CD4-positive, alpha-beta memory T cell (primary cell): ENCODE measurements at regions of chr6 and their contacts with region 1.

Region 1: GRCh38 chr6:16206595-16207037 is 31.8 kb upstream of the GMPR start:
- DNase-seq: peak; percentile 49 to 58 (median 55)
- H3K4me3 ChIP-seq: no peak overlapping the region
- H3K4me3 Mint-ChIP-seq: no peak overlapping the region
- H3K27ac ChIP-seq: no peak overlapping the region
- H3K27ac Mint-ChIP-seq: no peak overlapping the region
- H3K4me1 ChIP-seq: no peaks in the 10 kb centered on the region
- H3K4me1 Mint-ChIP-seq: peaks cover 0 to 4% (median 2%) of the 10 kb centered on the region in 4 donors
- H3K27me3 ChIP-seq: no peaks in the 10 kb centered on the region
- H3K27me3 Mint-ChIP-seq: peaks cover 6 to 23% of the 10 kb centered on the region in 2 donors

Region 2: GRCh38 chr6:15491255-15491985 is 715.2 kb before region 1 on chr6:
- CTCF ChIA-PET with region 1: no interaction called
- POLR2A ChIA-PET with region 1: no interaction called
- intact Hi-C with region 1: loop called (anchors 5 kb)
- DNase-seq: peak; percentile 61 to 64 (median 63)
- H3K4me3 ChIP-seq: no peak overlapping the region
- H3K4me3 Mint-ChIP-seq: no peak overlapping the region
- H3K27ac ChIP-seq: no peak overlapping the region
- H3K27ac Mint-ChIP-seq: peak overlapping the region in 6 of 7 donors; percentile 10 to 61 (median 48)
- H3K4me1 ChIP-seq: peaks cover 7% of the 10 kb centered on the region
- H3K4me1 Mint-ChIP-seq: peaks cover 22 to 32% (median 24%) of the 10 kb centered on the region in 4 donors
- H3K27me3 ChIP-seq: no peaks in the 10 kb centered on the region
- H3K27me3 Mint-ChIP-seq: no peaks in the 10 kb centered on the region

Region 3: DNA sequence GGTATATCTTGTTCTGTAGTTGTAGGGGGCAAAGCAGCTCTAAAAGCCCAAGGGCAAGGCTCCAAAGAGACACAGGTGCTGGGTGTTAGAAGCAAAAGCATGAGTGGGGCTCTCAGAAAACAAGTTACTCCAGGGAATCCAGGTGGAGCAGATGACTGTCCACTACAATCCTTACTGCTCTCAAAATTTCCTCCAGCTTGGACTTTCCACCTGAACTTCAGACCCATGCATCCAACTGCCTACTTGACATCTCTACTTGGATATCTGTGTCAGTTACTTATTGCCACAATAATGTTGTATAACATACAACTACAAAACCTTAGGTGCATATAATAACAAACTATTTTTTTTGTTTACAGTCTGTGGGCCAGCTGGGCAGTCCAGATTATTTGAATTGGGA is 521.0 kb before region 1 on chr6:
- CTCF ChIA-PET with region 1: interaction called, 15 read pairs
- POLR2A ChIA-PET with region 1: no interaction called
- intact Hi-C with region 1: no loop called
- DNase-seq: no peak
- H3K4me3 ChIP-seq: no peak overlapping the region
- H3K4me3 Mint-ChIP-seq: no peak overlapping the region
- H3K27ac ChIP-seq: no peak overlapping the region
- H3K27ac Mint-ChIP-seq: no peak overlapping the region
- H3K4me1 ChIP-seq: no peaks in the 10 kb centered on the region
- H3K4me1 Mint-ChIP-seq: no peaks in the 10 kb centered on the region
- H3K27me3 ChIP-seq: peaks cover 3% of the 10 kb centered on the region
- H3K27me3 Mint-ChIP-seq: peaks cover 3 to 12% of the 10 kb centered on the region in 2 donors

Region 4: GRCh38 chr6:15691250-15691869 is 515.3 kb before region 1 on chr6:
- CTCF ChIA-PET with region 1: interaction called, 147 read pairs
- POLR2A ChIA-PET with region 1: no interaction called
- intact Hi-C with region 1: loop called (anchors 1 kb)
- DNase-seq: peak; percentile 75 to 80 (median 77)
- H3K4me3 ChIP-seq: no peak overlapping the region
- H3K4me3 Mint-ChIP-seq: peak overlapping the region in 1 of 8 donors; percentile 11
- H3K27ac ChIP-seq: no peak overlapping the region
- H3K27ac Mint-ChIP-seq: peak overlapping the region in 4 of 7 donors; percentile 4 to 36 (median 20)
- H3K4me1 ChIP-seq: no peaks in the 10 kb centered on the region
- H3K4me1 Mint-ChIP-seq: peaks cover 4 to 8% (median 5%) of the 10 kb centered on the region in 4 donors
- H3K27me3 ChIP-seq: no peaks in the 10 kb centered on the region
- H3K27me3 Mint-ChIP-seq: peaks cover 7% of the 10 kb centered on the region in 2 donors

Region 5: DNA sequence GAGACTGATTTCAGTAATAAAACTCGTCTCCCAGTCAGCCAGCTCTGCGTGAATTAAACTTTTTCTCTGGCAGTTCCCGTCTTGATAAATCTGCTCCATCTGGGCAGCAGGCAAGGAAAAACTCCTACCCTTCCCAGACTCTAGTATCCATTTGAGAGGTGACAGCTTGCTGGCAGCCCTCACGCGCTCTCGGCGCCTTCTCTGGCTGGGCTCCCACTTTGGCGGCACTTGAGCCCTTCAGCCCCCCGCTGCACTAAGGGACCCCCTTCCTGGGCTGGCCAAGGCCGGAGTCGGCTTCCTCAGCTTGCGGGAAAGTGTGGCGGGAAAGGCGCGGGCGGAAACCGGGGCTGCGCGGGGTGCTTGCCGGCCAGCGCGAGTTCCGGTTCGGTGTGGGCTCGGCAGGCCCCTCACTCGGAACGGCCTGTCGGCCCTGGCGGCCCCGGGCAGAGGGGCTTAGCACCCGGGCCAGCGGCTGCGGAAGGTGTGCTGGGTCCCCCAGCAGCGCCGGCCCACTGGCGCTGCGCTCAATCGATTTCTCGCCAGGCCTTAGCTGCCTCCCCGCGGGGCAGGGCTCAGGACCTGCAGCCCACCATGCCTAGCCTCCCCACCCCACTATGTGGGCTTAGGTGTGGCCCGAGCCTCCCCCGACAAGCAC is 10.0 kb after region 1 on chr6:
- CTCF ChIA-PET with region 1: interaction called, 18 read pairs
- POLR2A ChIA-PET with region 1: no interaction called
- intact Hi-C with region 1: no loop called
- DNase-seq: no peak
- H3K4me3 ChIP-seq: no peak overlapping the region
- H3K4me3 Mint-ChIP-seq: no peak overlapping the region
- H3K27ac ChIP-seq: no peak overlapping the region
- H3K27ac Mint-ChIP-seq: no peak overlapping the region
- H3K4me1 ChIP-seq: no peaks in the 10 kb centered on the region
- H3K4me1 Mint-ChIP-seq: no peaks in the 10 kb centered on the region
- H3K27me3 ChIP-seq: no peaks in the 10 kb centered on the region
- H3K27me3 Mint-ChIP-seq: peaks cover 26 to 35% of the 10 kb centered on the region in 2 donors